Gastrocnemius medialis (tissue), 4 donors: ENCODE measurements at regions of chr3 and their contacts with region 1.

Region 1: DNA sequence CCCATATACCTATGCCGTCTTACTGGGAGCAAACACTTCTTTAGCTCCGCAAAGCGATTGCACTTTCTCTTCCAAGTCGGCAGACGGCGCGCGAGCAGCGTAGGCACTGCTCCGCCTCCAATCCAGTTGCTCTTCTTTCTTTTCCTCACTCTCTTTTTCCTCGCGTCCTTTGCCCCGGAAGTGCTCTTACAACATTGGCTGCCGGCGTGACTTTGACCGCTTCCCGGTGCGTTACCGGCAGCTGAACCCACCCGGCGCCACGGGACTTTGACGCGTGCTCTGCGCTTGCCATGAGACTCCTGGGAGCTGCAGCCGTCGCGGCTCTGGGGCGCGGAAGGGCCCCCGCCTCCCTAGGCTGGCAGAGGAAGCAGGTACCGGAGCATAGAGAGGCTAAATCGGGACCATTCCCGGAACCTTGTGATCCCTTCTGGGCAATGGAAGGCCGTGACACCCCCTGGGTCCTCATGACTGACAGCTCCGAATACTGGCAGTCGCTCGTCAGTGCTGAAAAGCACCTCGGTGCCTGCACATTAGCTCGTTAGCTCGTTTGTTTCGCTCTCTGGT is at the start of gene GFM1:
- DNase-seq: peak; percentile 91 to 96
- ATAC-seq: peak; percentile 100
- H3K4me3 ChIP-seq: peak within 1 kb of the TSS; percentile 75 to 91 (median 77)
- H3K27ac ChIP-seq: peak within 1 kb of the TSS; percentile 90 to 96 (median 94)
- H3K4me1 ChIP-seq: peaks cover 25 to 39% of the 10 kb centered on the region in 2 donors
- H3K27me3 ChIP-seq: no peaks in the 10 kb centered on the region
- CTCF ChIP-seq: peak; percentile 62 to 88 (median 66)
- POLR2A ChIP-seq: peak; percentile 76 to 84
- total RNA-seq, gene GFM1: 52.6 to 84.4 (median 76.2) TPM

Region 2: DNA sequence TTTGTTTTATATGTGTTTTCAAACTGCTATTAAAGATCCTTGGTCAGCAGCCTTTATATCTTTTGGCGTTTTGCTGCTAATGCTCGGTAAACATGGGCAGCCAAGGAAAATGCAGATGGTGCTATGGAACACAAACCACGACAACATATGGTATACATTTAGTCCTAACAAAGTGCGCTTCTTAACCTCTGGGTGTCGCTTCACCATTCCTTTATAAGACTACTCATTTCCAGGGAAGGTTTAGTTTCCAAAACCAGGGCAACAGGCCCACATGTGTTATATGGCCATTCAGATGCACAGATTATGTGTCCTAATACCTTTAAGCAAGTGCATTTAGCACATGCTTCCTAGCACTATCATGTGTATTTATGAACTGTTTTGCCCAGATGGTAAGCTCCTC is 552.9 kb before region 1 on chr3:
- in situ Hi-C with region 1: no loop called
- intact Hi-C with region 1: no loop called
- DNase-seq: no peak
- ATAC-seq: no peak
- H3K4me3 ChIP-seq: no peak overlapping the region
- H3K27ac ChIP-seq: no peak overlapping the region
- H3K4me1 ChIP-seq: no peaks in the 10 kb centered on the region
- H3K27me3 ChIP-seq: peaks cover 27 to 50% (median 49%) of the 10 kb centered on the region in 3 donors
- CTCF ChIP-seq: peak in 1 of 5 experiments; percentile 22
- POLR2A ChIP-seq: no peak

Region 3: GRCh38 chr3:158109804-158110657 is 534.4 kb before region 1 on chr3 and contains the start of gene RSRC1:
- in situ Hi-C with region 1: loop called in 1 of 4 experiments (anchors 25 kb)
- intact Hi-C with region 1: no loop called
- DNase-seq: peak; percentile 78 to 80
- ATAC-seq: peak; percentile 93 to 94
- H3K4me3 ChIP-seq: peak within 1 kb of the TSS; percentile 80 to 97 (median 90)
- H3K27ac ChIP-seq: peak within 1 kb of the TSS; percentile 80 to 89 (median 86)
- H3K4me1 ChIP-seq: peaks cover 17 to 40% of the 10 kb centered on the region in 2 donors
- H3K27me3 ChIP-seq: peaks cover 40 to 42% (median 40%) of the 10 kb centered on the region in 3 donors
- CTCF ChIP-seq: peak in 1 of 5 experiments; percentile 7
- POLR2A ChIP-seq: peak; percentile 16 to 45
- total RNA-seq, gene RSRC1: 27.7 to 36.7 (median 31.9) TPM

Region 4: DNA sequence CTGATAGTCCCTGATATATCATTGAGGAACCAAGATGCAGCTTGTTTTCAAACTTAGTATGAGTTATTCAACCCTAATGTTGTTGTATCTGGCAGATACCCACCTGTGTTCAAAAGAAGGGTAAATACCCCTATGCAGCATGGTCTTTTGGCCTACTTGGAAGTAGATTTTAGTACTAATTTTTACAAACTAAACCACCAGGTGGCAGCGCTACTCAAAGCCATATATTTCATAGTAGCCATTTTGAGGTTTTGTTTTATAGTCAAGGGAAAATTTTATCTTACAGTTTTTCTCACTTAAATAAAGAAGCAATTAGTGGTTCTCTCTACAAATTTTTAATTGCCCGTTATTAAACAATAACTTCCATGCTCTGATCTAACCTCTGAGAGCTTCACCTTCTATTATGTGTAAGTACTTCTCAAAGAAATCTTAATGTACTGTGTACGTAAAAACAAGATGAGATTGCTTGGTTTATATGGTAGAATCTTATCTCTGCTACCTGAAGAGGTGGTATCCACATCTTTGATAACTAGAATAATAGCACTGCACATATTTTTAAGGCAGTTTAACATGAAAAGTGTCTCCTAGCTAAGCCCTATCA is 104.9 kb before region 1 on chr3:
- in situ Hi-C with region 1: no loop called
- intact Hi-C with region 1: loop called (anchors 5 kb)
- DNase-seq: no peak
- ATAC-seq: no peak
- H3K4me3 ChIP-seq: no peak overlapping the region
- H3K27ac ChIP-seq: no peak overlapping the region
- H3K4me1 ChIP-seq: no peaks in the 10 kb centered on the region
- H3K27me3 ChIP-seq: no peaks in the 10 kb centered on the region
- CTCF ChIP-seq: peak; percentile 21 to 56 (median 36)
- POLR2A ChIP-seq: no peak

Region 5: GRCh38 chr3:158801696-158802408 is 157.4 kb after region 1 on chr3 and contains the start of gene MFSD1:
- in situ Hi-C with region 1: no loop called
- intact Hi-C with region 1: loop called (anchors 5 kb)
- DNase-seq: peak; percentile 90 to 94
- ATAC-seq: peak; percentile 98
- H3K4me3 ChIP-seq: peak within 1 kb of the TSS; percentile 68 to 99 (median 92)
- H3K27ac ChIP-seq: peak within 1 kb of the TSS; percentile 80 to 95 (median 86)
- H3K4me1 ChIP-seq: peaks cover 16 to 30% of the 10 kb centered on the region in 2 donors
- H3K27me3 ChIP-seq: no peaks in the 10 kb centered on the region
- CTCF ChIP-seq: no peak
- POLR2A ChIP-seq: peak; percentile 76 to 80
- total RNA-seq, gene MFSD1: 18.6 to 33.5 (median 25.2) TPM

Region 6: GRCh38 chr3:158839966-158840365 is 195.5 kb after region 1 on chr3:
- in situ Hi-C with region 1: no loop called
- intact Hi-C with region 1: no loop called
- DNase-seq: no peak
- ATAC-seq: no peak
- H3K4me3 ChIP-seq: no peak overlapping the region
- H3K27ac ChIP-seq: no peak overlapping the region
- H3K4me1 ChIP-seq: no peaks in the 10 kb centered on the region
- H3K27me3 ChIP-seq: no peaks in the 10 kb centered on the region
- CTCF ChIP-seq: no peak
- POLR2A ChIP-seq: no peak